ENCODE measurements at regions of chr15 and their contacts with region 1.

Region 1: DNA sequence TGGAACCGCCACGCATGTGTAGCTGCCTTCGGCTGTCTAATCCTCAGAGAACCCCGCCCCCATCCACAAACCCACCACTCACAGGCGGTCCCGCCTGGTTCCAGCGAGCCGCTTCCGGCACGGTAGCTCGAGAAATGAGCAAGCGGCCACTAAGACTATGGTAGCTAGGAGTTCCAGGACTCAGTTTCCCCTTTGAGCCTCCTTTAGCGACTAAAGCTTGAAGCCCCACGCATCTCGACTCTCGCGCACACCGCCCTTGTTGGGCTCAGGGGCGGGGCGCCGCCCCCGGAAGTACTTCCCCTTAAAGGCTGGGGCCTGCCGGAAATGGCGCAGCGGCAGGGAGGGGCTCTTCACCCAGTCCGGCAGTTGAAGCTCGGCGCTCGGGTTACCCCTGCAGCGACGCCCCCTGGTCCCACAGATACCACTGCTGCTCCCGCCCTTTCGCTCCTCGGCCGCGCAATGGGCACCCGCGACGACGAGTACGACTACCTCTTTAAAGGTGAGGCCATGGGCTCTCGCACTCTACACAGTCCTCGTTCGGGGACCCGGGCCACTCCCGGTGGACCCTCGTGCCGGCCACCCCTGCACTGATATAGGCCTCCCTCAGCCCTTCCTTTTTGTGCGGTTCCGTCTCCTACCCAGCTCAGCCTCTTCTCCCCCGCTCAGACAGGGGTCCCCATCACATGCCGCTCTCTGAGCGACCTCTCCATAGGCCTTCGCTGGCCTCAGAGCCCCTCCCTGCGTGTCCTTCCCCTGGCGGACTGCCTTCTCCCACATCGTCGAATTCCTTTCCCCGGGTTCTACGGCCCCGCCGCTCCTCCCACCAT is at the start of gene RAB11A:
- DNase-seq: peak; percentile 97
- H3K4me3 Mint-ChIP-seq: peak within 1 kb of the TSS; percentile 99
- H3K27ac Mint-ChIP-seq: peak within 1 kb of the TSS; percentile 95
- H3K4me1 Mint-ChIP-seq: peaks cover 36% of the 10 kb centered on the region
- H3K27me3 Mint-ChIP-seq: peaks cover 6% of the 10 kb centered on the region

Region 2: GRCh38 chr15:65856821-65857455 is 12.4 kb before region 1 on chr15:
- CTCF ChIA-PET with region 1: interaction called, 10 read pairs
- DNase-seq: peak; percentile 89
- H3K4me3 Mint-ChIP-seq: no peak overlapping the region
- H3K27ac Mint-ChIP-seq: no peak overlapping the region
- H3K4me1 Mint-ChIP-seq: peaks cover 8% of the 10 kb centered on the region
- H3K27me3 Mint-ChIP-seq: peaks cover 17% of the 10 kb centered on the region

Measured in activated naive CD4-positive, alpha-beta T cell treated with anti-CD3 and anti-CD28 coated beads, Interleukin-2, amount 10 ng/mL, durations not matched to agents 7 days and 5 days (primary cell).